ENCODE measurements at regions of chr7 and their contacts with region 1.

Region 1: DNA sequence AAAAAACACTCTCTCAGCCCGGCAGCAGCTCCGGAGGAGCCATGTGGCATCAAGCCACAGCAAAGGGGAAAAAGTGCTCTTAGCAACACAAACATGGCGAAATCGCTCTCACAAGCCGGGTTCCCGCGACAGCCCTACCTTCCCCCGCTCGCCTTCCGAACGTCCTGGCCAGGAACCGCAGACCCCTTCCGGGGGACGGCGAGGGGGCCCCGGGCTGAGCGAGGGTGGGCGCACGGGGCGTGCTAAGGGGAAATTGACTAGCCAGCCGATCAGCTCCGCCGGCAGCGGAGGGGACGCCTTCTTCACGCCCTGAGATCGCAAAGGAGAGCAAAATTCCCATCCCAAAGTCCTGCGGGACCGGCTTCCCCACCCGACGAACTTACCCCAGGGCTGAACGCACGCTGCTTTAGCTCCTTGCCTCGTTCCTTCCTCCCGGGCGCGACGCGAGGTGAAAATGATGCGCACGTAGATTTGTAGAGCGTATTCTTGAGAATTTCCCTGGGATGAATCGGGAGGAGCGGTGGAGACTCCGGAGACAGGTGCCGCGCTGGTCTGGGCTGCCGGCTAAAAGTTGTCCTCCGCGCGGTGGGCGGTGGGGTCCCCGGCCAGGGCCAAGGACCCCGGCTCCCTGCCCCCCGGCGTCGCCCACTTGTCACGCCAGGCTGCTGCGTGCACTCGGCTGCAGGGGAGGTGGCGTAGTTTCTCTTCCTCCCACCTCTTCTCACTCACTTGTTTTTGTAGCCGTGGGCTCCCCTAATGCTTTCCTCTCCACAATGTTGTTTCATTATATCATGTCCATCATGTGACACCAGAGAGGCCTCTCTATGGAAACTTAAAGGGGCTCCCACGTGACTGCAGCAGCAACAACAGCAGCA is 220.1 kb upstream of the MKLN1 start:
- DNase-seq: peak; percentile 67 to 81
- ATAC-seq: peak; percentile 19

Region 2: DNA sequence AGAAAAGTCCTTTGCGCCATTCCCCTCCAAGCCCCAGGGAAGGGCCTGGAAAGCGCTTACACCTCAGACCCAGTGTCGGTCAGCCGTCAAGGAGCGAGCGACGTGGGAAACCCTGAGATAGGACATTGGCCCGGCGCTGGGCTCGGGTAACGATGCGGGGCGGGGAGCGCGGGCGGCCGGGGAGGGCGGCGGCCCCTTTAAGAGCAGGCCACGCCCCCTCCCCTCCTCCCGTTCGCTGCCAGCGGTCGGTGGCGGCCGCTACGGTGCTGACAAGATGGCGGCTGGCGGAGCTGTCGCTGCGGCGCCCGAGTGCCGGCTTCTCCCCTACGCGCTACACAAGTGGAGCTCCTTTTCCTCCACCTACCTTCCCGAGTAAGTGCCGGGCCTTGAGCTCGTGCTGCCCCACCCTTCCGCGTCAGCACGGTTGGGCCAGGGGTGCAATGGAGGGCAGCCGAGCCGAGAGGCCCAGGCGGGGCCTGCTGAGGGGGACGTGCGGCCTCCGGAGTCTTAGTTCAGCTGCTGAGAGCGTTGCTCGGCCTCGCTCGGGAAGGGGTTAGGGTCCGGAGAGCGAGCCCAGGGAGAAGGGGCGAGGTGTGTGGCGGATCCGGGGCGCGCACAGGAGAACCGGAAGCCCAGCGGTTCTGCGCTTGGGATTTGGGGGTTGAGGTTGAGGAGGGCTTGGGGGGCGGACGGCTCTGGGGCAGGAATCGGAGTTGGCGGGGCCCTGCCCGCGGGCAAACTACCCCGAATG is 220.2 kb after region 1 on chr7 and contains the start of gene MKLN1:
- intact Hi-C with region 1: loop called in 1 of 2 experiments (anchors 10 kb)
- DNase-seq: peak; percentile 91 to 97
- ATAC-seq: peak; percentile 96
- total RNA-seq, gene MKLN1: 38.7 to 57.7 TPM

Region 3: DNA sequence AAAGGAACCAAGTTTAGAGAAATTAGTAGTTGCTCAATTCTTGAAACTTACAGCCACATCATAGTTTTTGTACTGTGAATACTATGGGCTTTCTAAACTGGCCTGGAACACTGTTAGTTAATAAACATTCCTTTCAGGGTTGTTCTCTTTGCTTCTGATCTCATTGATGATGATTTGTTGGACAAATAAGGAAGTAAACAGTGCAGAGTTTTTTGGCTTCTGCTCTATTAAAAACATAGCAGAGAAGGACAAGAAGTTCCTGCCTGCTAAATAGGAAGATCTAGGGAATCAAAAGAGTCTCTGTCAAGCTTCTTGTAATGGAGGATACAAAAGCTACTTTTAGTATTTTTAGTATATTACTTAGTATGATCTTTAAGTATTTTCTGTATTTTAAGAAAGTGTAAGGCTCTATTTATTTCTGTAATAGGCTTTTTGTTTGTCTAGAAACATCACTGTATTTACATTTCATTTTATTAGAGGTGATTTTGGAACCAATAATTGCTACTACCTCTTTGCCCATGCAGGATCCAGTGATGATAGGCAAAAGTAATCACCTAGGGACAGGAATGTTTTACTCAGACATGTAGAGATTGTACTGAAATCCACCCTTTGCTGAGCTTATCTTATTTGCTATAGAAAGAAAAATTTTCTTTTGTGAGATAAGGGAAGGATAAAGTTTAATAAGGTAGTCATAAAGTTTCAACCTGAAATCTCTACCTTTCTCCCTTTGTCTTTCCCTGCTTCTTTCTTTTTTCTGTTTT is 293.4 kb after region 1 on chr7:
- intact Hi-C with region 1: no loop called
- DNase-seq: no peak
- ATAC-seq: peak; percentile 80

Region 4: GRCh38 chr7:131424219-131424822 is 316.7 kb after region 1 on chr7:
- intact Hi-C with region 1: loop called in 1 of 2 experiments (anchors 10 kb)
- DNase-seq: no peak
- ATAC-seq: peak; percentile 73

Region 5: GRCh38 chr7:131480384-131481315 is 373.1 kb after region 1 on chr7:
- intact Hi-C with region 1: no loop called
- DNase-seq: no peak
- ATAC-seq: peak; percentile 75